MCF 10A (cell line): ENCODE measurements at regions of chr12 and their contacts with region 1.

Region 1: GRCh38 chr12:50542448-50542847 is 37.7 kb downstream of the DIP2B start:
- DNase-seq: peak; percentile 49
- H3K4me3 Mint-ChIP-seq: no peak overlapping the region
- H3K27ac Mint-ChIP-seq: peak overlapping the region; percentile 96
- H3K4me1 Mint-ChIP-seq: peaks cover 21% of the 10 kb centered on the region
- H3K27me3 Mint-ChIP-seq: no peaks in the 10 kb centered on the region
- CTCF ChIP-seq: no peak

Region 2: GRCh38 chr12:50419511-50419909 is 122.9 kb before region 1 on chr12:
- CTCF ChIA-PET with region 1: no interaction called
- POLR2A ChIA-PET with region 1: no interaction called
- intact Hi-C with region 1: no loop called
- DNase-seq: peak; percentile 16
- H3K4me3 Mint-ChIP-seq: no peak overlapping the region
- H3K27ac Mint-ChIP-seq: no peak overlapping the region
- H3K4me1 Mint-ChIP-seq: peaks cover 14% of the 10 kb centered on the region
- H3K27me3 Mint-ChIP-seq: no peaks in the 10 kb centered on the region
- CTCF ChIP-seq: no peak

Region 3: DNA sequence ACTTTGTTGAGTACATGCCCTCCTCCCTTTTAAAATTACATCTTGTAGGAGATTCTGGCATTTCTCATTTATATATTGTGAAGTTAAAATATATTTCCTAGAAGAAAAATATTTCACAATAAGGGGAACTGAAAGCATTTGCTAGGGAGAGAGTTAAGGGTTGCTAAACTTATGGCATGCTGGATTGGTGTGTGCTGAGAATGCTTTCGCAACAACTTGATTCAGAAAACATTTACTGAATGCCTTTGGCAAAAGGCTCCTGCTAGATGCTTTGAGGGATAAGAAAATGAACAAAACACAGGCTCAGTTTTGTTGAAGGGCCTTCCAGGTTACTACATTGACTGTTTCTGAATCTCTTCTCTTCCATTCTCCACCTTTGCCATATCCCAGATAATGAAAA is 29.8 kb after region 1 on chr12:
- CTCF ChIA-PET with region 1: interaction called, 5 read pairs
- POLR2A ChIA-PET with region 1: interaction called, 17 read pairs
- intact Hi-C with region 1: no loop called
- DNase-seq: peak; percentile 84
- H3K4me3 Mint-ChIP-seq: no peak overlapping the region
- H3K27ac Mint-ChIP-seq: peak overlapping the region; percentile 70
- H3K4me1 Mint-ChIP-seq: peaks cover 24% of the 10 kb centered on the region
- H3K27me3 Mint-ChIP-seq: no peaks in the 10 kb centered on the region
- CTCF ChIP-seq: no peak

Region 4: DNA sequence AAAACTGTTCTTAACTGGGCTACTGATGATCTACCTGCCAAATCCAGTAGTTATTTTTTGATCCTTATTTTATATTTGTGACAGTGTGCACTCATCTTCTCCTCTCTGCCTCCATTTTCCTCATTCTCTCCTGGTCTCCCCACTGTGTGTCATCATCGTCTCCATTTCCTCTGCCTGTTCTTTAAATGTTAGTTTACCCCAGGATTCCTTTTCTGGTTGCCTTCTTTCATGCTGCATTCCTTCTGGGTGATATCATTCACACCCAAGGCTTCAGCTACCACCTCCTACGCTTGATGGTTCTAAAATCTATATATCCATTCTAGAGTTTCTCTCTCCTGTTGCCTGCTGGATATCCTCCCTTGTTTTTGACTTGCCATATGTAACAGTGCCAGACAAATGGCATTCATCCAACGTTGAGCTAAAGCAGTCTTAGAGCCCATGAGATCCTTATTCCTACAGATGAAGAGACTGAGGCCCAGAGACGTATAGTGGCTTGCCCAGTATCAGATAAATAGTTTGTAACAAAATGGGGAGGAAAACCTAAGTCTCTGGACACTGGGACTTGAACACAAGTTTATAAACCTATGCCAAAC is 71.8 kb after region 1 on chr12:
- CTCF ChIA-PET with region 1: interaction called, 5 read pairs
- POLR2A ChIA-PET with region 1: interaction called, 12 read pairs
- intact Hi-C with region 1: no loop called
- DNase-seq: peak; percentile 67
- H3K4me3 Mint-ChIP-seq: no peak overlapping the region
- H3K27ac Mint-ChIP-seq: no peak overlapping the region
- H3K4me1 Mint-ChIP-seq: peaks cover 27% of the 10 kb centered on the region
- H3K27me3 Mint-ChIP-seq: no peaks in the 10 kb centered on the region
- CTCF ChIP-seq: no peak

Region 5: GRCh38 chr12:50620109-50620977 is 77.9 kb after region 1 on chr12:
- CTCF ChIA-PET with region 1: interaction called, 3 read pairs
- POLR2A ChIA-PET with region 1: interaction called, 12 read pairs
- intact Hi-C with region 1: no loop called
- DNase-seq: peak; percentile 61
- H3K4me3 Mint-ChIP-seq: peak overlapping the region; percentile 28
- H3K27ac Mint-ChIP-seq: peak overlapping the region; percentile 61
- H3K4me1 Mint-ChIP-seq: peaks cover 56% of the 10 kb centered on the region
- H3K27me3 Mint-ChIP-seq: no peaks in the 10 kb centered on the region
- CTCF ChIP-seq: no peak

Region 6: GRCh38 chr12:50637870-50638481 is 95.5 kb after region 1 on chr12:
- CTCF ChIA-PET with region 1: no interaction called
- POLR2A ChIA-PET with region 1: interaction called, 10 read pairs
- intact Hi-C with region 1: no loop called
- DNase-seq: peak; percentile 36
- H3K4me3 Mint-ChIP-seq: no peak overlapping the region
- H3K27ac Mint-ChIP-seq: no peak overlapping the region
- H3K4me1 Mint-ChIP-seq: peaks cover 18% of the 10 kb centered on the region
- H3K27me3 Mint-ChIP-seq: no peaks in the 10 kb centered on the region
- CTCF ChIP-seq: peak; percentile 40